ENCODE measurements at regions of chr2 and their contacts with region 1.

Region 1: GRCh38 chr2:112749755-112750559 is 14.5 kb downstream of the CKAP2L start:
- DNase-seq: peak; percentile 81
- H3K4me3 ChIP-seq: no peak overlapping the region
- H3K27ac ChIP-seq: peak overlapping the region in 1 of 4 donors; percentile 27
- H3K4me1 ChIP-seq: peaks cover 0 to 12% (median 5%) of the 10 kb centered on the region in 4 donors
- H3K27me3 ChIP-seq: no peaks in the 10 kb centered on the region
- CTCF ChIP-seq: peak; percentile 86 to 95 (median 87)
- EP300 ChIP-seq: no peak
- POLR2A ChIP-seq: no peak

Region 2: DNA sequence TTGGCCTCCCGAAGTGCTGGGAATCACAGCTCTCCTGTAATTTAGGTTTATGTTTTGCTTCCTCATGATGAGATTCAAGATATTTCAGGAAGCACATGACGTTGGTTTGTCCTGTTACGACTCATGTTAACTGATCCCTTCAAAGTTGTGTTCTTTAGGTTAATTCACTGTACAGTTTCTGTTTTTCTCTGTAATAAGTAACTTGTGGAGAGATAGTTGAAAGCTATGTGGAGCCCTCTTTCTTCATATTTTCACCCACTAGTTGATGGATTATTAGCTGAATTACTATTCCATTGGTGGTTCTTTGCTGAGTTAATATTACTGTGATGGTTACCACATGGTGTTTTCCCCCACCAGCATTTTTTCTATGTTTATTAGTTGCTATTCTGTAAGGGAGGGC is 183.9 kb before region 1 on chr2:
- in situ Hi-C with region 1: no loop called
- intact Hi-C with region 1: no loop called
- DNase-seq: no peak
- H3K4me3 ChIP-seq: no peak overlapping the region
- H3K27ac ChIP-seq: no peak overlapping the region
- H3K4me1 ChIP-seq: no peaks in the 10 kb centered on the region
- H3K27me3 ChIP-seq: no peaks in the 10 kb centered on the region
- CTCF ChIP-seq: no peak
- EP300 ChIP-seq: no peak
- POLR2A ChIP-seq: no peak

Region 3: DNA sequence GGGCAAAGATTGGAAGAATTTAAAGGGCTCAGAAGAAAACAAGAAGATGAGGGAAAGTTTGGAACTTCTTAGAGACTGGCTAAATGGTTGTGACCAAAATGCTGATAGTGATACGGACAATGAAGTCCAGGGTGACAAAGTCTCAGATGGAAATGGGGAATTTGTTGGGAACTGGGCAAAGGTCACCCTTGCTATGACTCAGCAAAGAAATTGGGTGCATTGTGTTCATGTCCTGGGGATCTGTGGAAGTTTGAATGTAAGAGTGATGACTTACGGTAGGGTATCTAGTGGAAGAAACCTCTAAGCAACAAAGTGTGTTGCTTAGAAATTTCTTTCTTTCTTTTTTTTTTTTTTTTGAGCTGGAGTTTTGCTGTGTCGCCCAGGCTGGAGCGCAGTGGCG is 40.3 kb after region 1 on chr2:
- in situ Hi-C with region 1: no loop called
- intact Hi-C with region 1: loop called (anchors 1 kb)
- DNase-seq: no peak
- H3K4me3 ChIP-seq: no peak overlapping the region
- H3K27ac ChIP-seq: no peak overlapping the region
- H3K4me1 ChIP-seq: peaks cover 0 to 7% (median 1%) of the 10 kb centered on the region in 4 donors
- H3K27me3 ChIP-seq: no peaks in the 10 kb centered on the region
- CTCF ChIP-seq: no peak
- EP300 ChIP-seq: no peak
- POLR2A ChIP-seq: no peak

Region 4: DNA sequence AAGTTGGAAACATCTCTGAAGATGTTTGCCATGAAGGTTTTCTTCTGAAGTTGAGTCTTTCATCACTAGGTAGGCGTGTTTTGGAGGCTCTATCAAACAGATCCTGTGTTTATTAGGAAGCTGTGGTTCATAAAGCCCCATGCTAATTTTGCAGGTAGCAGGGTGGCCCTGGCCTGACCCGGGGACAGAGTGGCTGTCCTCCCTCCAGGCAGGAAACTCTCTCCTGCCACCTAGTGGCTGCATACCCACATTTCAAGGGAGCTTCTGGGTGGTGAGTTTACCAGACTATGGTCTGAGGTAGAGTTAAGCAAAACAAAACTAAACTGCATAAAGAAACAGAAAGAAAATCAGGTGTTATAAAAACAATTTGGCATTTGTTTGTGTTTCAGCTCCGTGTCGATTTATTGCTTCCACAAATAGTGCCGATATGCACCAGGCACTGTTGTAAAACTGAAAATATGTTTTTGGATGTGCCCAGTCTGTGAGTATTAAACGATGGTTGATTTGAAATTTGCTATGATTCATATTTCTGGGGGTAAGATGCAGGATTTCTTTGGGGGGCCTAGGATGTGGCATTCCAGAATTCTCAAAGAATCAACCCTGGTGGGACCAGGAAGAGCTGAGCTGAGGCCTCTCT is 135.0 kb after region 1 on chr2:
- in situ Hi-C with region 1: loop called in 2 of 4 experiments (anchors 5 to 25 kb)
- intact Hi-C with region 1: no loop called
- DNase-seq: peak; percentile 76
- H3K4me3 ChIP-seq: no peak overlapping the region
- H3K27ac ChIP-seq: no peak overlapping the region
- H3K4me1 ChIP-seq: no peaks in the 10 kb centered on the region
- H3K27me3 ChIP-seq: no peaks in the 10 kb centered on the region
- CTCF ChIP-seq: peak; percentile 59 to 82 (median 81)
- EP300 ChIP-seq: no peak
- POLR2A ChIP-seq: no peak

Region 5: DNA sequence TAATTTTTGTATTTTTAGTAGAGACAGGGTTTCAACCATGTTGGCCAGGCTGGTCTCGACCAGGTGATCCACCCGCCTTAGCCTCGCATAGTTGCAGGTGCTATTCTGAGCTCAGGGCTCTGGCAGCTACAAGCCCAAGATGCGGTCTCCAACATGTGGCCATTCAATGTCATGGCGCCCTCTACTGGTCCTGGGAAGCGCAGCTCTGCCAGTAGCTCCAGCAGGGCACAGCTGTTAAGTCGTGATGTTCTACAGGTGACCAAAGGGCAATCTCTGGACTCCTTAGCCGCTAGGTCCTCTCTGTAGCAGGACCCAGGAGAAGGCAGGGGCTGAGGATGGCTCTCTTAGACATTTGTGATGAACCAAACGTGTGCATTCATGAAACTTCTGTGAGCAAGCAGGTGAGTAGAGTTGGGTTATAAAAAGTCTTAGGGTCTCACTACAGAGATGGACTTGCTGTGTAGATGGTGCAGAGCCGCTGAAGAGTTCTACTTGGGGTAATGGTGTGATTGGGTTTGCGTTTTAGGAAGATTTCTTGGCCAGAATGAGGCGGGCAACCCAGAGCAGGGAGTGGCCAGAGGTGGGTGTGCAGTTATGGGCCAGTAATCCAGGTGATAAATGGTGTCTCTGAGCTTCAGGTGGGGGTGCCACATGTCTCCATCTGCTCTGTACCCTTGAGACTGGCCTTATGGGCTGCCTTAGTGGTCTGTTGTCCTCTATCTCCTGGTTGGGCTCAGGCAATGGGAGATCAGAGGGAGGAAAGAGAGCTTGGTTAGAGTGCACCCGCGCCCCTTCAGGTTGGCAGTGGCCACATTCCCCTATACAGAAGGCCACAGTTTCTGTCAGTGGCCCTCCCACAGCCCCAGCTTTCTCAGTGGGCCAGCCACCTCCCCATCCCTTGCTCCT is 192.0 kb after region 1 on chr2:
- in situ Hi-C with region 1: loop called in 2 of 4 experiments (anchors 5 to 10 kb)
- intact Hi-C with region 1: no loop called
- DNase-seq: peak; percentile 85
- H3K4me3 ChIP-seq: no peak overlapping the region
- H3K27ac ChIP-seq: no peak overlapping the region
- H3K4me1 ChIP-seq: peaks cover 0 to 13% (median 7%) of the 10 kb centered on the region in 4 donors
- H3K27me3 ChIP-seq: no peaks in the 10 kb centered on the region
- CTCF ChIP-seq: peak; percentile 70 to 84 (median 82)
- EP300 ChIP-seq: no peak
- POLR2A ChIP-seq: no peak

Region 6: GRCh38 chr2:112958428-112959108 is 208.6 kb after region 1 on chr2:
- in situ Hi-C with region 1: loop called in 2 of 4 experiments (anchors 10 to 25 kb)
- intact Hi-C with region 1: no loop called
- DNase-seq: no peak
- H3K4me3 ChIP-seq: no peak overlapping the region
- H3K27ac ChIP-seq: no peak overlapping the region
- H3K4me1 ChIP-seq: no peaks in the 10 kb centered on the region
- H3K27me3 ChIP-seq: no peaks in the 10 kb centered on the region
- CTCF ChIP-seq: peak; percentile 58 to 80 (median 68)
- EP300 ChIP-seq: no peak
- POLR2A ChIP-seq: no peak

Region 7: DNA sequence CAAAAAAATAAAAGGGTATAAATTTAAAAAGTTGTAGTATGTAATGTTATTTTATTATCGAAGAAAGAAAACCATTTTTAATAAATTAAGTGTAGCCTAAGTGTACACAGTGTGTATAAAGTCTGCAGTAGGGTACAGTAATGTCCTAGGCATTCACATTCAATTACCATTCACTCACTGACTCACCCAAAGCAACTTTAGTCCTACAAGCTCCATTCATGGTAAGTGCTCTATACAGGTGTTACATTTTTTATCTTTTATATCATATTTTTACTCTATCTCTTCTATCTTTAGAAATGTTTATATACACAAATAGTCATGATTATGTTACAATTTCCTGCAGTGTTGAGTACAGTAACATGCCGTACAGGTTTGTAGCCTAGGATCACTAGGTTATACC is 936.6 kb after region 1 on chr2:
- in situ Hi-C with region 1: no loop called
- intact Hi-C with region 1: no loop called
- DNase-seq: no peak
- H3K4me3 ChIP-seq: no peak overlapping the region
- H3K27ac ChIP-seq: no peak overlapping the region
- H3K4me1 ChIP-seq: no peaks in the 10 kb centered on the region
- H3K27me3 ChIP-seq: no peaks in the 10 kb centered on the region
- CTCF ChIP-seq: no peak
- EP300 ChIP-seq: no peak
- POLR2A ChIP-seq: no peak